Sigmoid colon (tissue), 7 donors: ENCODE measurements at regions of chr9 and their contacts with region 1.

Region 1: GRCh38 chr9:132240753-132241493 is 79.1 kb downstream of the NTNG2 start:
- DNase-seq: peak; percentile 99
- H3K4me3 ChIP-seq: peak overlapping the region; percentile 53 to 74 (median 60)
- H3K27ac ChIP-seq: peak overlapping the region; percentile 47 to 70 (median 62)
- H3K4me1 ChIP-seq: peaks cover 0 to 30% (median 18%) of the 10 kb centered on the region in 4 donors
- H3K27me3 ChIP-seq: peaks cover 0 to 11% (median 4%) of the 10 kb centered on the region in 3 donors
- CTCF ChIP-seq: no peak
- EP300 ChIP-seq: no peak
- POLR2A ChIP-seq: no peak

Region 2: DNA sequence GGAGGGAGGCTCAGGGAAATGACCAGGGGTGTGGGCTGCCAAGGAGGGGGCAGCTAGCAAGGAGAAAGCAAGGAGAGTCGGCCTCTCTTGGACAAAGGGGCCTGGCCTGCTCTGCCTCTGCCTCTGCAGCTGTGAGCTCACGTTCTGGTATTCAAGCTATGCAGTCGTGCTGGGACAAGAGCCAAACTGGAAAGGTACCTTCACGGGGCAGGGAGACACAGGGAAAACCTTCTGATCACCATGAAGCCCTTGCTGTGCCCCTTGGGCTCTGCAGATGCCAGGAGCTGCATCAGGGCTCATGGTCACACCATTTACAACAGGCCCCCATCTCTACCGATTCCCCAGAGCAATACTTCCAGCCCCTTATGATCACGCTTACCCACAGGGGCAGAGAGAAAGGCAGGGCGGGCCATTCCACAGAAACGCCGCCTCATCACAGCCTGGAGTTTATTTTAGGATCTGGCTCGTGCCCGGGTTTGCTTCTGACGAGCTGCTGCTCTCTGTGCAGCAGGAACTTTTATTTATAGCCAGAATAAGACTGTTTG is 632.4 kb before region 1 on chr9:
- intact Hi-C with region 1: loop called (anchors 10 kb)
- DNase-seq: peak; percentile 93
- H3K4me3 ChIP-seq: peak overlapping the region in 3 of 4 donors; percentile 0 to 25 (median 8)
- H3K27ac ChIP-seq: peak overlapping the region; percentile 79 to 93 (median 85)
- H3K4me1 ChIP-seq: peaks cover 0 to 53% (median 43%) of the 10 kb centered on the region in 4 donors
- H3K27me3 ChIP-seq: no peaks in the 10 kb centered on the region
- CTCF ChIP-seq: no peak
- EP300 ChIP-seq: peak in 1 of 4 donors; percentile 23
- POLR2A ChIP-seq: no peak

Region 3: GRCh38 chr9:131762356-131762932 is 478.5 kb before region 1 on chr9:
- intact Hi-C with region 1: loop called (anchors 1 kb)
- DNase-seq: peak; percentile 82
- H3K4me3 ChIP-seq: no peak overlapping the region
- H3K27ac ChIP-seq: no peak overlapping the region
- H3K4me1 ChIP-seq: peaks cover 0 to 9% (median 7%) of the 10 kb centered on the region in 4 donors
- H3K27me3 ChIP-seq: peaks cover 0 to 24% (median 0%) of the 10 kb centered on the region in 3 donors
- CTCF ChIP-seq: peak; percentile 85 to 97 (median 90)
- EP300 ChIP-seq: no peak
- POLR2A ChIP-seq: no peak

Region 4: GRCh38 chr9:132079391-132080091 is 161.4 kb before region 1 on chr9 and contains the start of gene MED27:
- intact Hi-C with region 1: loop called (anchors 2 kb)
- DNase-seq: peak; percentile 93
- H3K4me3 ChIP-seq: peak within 1 kb of the TSS; percentile 82 to 86 (median 84)
- H3K27ac ChIP-seq: peak within 1 kb of the TSS; percentile 66 to 85 (median 82)
- H3K4me1 ChIP-seq: peaks cover 0 to 42% (median 18%) of the 10 kb centered on the region in 4 donors
- H3K27me3 ChIP-seq: no peaks in the 10 kb centered on the region
- CTCF ChIP-seq: no peak
- EP300 ChIP-seq: no peak
- POLR2A ChIP-seq: no peak
- total RNA-seq, gene MED27: 11.9 to 19.7 (median 15.5) TPM

Region 5: GRCh38 chr9:132169672-132170392 is 71.1 kb before region 1 on chr9:
- intact Hi-C with region 1: loop called (anchors 1 kb)
- DNase-seq: peak; percentile 71
- H3K4me3 ChIP-seq: no peak overlapping the region
- H3K27ac ChIP-seq: no peak overlapping the region
- H3K4me1 ChIP-seq: peaks cover 0 to 1% (median under 1%) of the 10 kb centered on the region in 4 donors
- H3K27me3 ChIP-seq: peaks cover 2 to 53% (median 49%) of the 10 kb centered on the region in 3 donors
- CTCF ChIP-seq: peak; percentile 40 to 78 (median 64)
- EP300 ChIP-seq: no peak
- POLR2A ChIP-seq: no peak